ENCODE measurements at regions of chr17 and their contacts with region 1.

Region 1: DNA sequence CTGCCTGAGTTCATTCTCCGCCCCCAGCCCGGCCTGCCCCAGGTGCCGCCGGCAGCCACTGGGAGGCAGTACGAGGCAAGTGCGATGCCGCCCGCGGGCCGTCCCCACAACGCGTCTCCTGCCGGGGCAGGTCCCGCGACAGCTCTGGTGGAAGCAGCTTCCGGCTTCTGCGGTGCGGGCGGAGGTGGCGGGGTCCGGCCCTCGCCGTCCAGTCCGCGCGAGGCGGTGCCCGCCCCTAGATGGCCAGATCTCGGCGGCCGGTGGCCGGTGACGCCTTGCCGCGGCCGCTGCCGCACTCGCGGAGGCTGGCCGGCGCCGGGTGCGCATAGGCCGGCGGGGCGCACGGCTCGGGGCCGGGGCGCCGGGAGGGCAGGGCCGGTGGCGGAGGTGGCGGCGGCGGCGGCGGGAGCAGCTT is 1.8 kb downstream of the GJD3 start:
- DNase-seq: peak; percentile 56 to 85 (median 73)
- ATAC-seq: peak in 3 of 4 donors; percentile 27 to 64 (median 43)
- H3K4me3 ChIP-seq: peak overlapping the region in 11 of 12 donors; percentile 43 to 69 (median 58)
- H3K27ac ChIP-seq: peak overlapping the region in 6 of 12 donors; percentile 17 to 60 (median 42)
- H3K4me1 ChIP-seq: peaks cover 0 to 33% (median 12%) of the 10 kb centered on the region in 12 donors
- H3K27me3 ChIP-seq: peaks cover 0 to 16% (median 0%) of the 10 kb centered on the region in 9 donors
- CTCF ChIP-seq: peak; percentile 25 to 70 (median 49)
- POLR2A ChIP-seq: no peak

Region 2: DNA sequence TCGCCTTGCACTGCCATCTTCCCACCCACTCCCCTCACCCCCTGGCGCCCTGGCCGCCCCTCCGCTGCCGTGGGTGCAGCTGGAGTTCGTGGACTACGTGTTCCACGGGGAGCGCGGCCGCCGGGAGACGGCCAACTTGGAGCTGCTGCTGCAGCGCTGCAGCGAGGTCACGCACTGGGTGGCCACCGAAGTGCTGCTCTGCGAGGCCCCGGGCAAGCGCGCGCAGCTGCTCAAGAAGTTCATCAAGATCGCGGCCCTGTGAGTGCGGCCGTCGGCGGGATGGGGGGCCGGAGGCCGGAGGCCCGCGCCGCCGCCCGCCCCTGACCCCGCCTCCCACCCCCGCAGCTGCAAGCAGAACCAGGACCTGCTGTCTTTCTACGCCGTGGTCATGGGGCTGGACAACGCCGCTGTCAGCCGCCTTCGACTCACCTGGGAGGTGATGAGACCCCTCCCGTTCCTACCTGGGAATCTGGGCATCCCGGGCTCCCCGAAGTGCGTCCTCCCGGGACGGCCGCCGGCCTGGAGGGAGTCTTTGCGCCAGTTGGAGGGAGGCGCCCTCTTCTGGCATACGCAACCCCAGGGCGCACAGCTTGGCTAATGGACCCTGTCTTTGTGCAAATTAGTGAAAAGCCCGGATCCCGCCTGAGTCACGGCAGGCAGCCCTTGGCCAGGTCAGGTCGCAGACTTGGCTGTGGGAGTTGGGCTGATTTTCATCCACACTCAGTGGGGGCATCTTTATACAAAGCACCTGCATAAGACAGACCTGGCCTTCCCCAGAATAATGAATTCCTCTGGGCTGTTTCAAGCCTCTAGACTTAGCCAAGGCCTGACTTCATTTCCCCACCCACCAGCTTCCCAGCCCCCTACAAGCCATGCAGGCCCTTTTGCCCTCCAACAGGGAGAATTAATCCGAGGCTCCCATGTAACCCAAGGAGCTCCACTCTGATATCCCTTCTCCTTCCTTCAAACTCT is 171.2 kb before region 1 on chr17:
- intact Hi-C with region 1: loop called in 1 of 10 experiments (anchors 10 kb)
- DNase-seq: peak; percentile 71 to 86 (median 78)
- ATAC-seq: peak; percentile 59 to 87 (median 84)
- H3K4me3 ChIP-seq: peak overlapping the region in 11 of 12 donors; percentile 40 to 75 (median 62)
- H3K27ac ChIP-seq: peak overlapping the region in 7 of 12 donors; percentile 1 to 67 (median 46)
- H3K4me1 ChIP-seq: peaks cover 0 to 23% (median 8%) of the 10 kb centered on the region in 12 donors
- H3K27me3 ChIP-seq: no peaks in the 10 kb centered on the region
- CTCF ChIP-seq: peak; percentile 46 to 84 (median 69)
- POLR2A ChIP-seq: no peak

Region 3: DNA sequence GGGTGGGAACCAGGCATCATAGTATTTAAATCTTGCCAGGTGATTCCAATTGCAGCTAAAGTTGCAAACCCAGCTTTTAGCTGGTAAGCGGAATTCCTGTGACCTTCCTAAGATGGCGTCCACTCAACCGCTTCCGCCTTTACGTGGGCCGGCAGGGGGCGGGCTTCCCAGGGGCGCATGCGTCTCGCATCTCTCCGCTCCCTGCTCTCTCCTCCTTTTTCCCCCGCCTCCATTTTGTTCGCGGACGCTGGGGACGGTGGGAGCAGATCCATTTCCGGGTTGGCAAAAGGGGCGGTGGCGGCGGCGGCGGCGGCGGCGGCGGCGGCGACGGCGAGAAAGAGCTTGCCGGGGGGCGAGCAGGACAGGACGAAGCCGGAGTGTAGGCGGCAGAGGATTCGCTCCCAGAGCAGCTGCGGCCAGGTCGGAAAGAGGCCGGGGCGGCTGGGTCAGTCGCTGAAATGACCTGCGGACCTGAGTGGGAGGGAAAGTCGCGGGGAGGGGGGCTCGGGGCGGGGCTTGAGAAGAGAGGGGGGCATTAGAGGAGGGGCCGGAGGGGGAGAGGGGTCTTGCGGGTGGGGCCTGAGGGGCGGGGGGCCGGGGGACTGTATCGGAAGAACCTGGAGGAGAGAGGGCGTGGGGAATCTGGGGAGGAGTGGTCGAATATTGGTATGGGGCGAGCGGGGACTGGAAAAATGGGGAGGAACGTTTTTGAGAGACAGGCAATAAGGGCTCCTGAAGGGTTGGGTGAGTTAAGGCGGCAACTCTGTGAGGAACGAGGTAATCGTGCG is 143.4 kb before region 1 on chr17 and contains the start of gene WIPF2:
- intact Hi-C with region 1: loop called in 1 of 10 experiments (anchors 10 kb)
- DNase-seq: peak; percentile 97 to 98 (median 97)
- ATAC-seq: peak; percentile 98 to 99 (median 99)
- H3K4me3 ChIP-seq: peak within 1 kb of the TSS; percentile 53 to 91 (median 71)
- H3K27ac ChIP-seq: peak within 1 kb of the TSS; percentile 69 to 96 (median 91)
- H3K4me1 ChIP-seq: peaks cover 0 to 28% (median 12%) of the 10 kb centered on the region in 12 donors
- H3K27me3 ChIP-seq: no peaks in the 10 kb centered on the region
- CTCF ChIP-seq: peak; percentile 56 to 93 (median 82)
- POLR2A ChIP-seq: peak in 1 of 2 donors; percentile 79
- total RNA-seq, gene WIPF2: 8.4 to 17.6 (median 11.2) TPM

Region 4: DNA sequence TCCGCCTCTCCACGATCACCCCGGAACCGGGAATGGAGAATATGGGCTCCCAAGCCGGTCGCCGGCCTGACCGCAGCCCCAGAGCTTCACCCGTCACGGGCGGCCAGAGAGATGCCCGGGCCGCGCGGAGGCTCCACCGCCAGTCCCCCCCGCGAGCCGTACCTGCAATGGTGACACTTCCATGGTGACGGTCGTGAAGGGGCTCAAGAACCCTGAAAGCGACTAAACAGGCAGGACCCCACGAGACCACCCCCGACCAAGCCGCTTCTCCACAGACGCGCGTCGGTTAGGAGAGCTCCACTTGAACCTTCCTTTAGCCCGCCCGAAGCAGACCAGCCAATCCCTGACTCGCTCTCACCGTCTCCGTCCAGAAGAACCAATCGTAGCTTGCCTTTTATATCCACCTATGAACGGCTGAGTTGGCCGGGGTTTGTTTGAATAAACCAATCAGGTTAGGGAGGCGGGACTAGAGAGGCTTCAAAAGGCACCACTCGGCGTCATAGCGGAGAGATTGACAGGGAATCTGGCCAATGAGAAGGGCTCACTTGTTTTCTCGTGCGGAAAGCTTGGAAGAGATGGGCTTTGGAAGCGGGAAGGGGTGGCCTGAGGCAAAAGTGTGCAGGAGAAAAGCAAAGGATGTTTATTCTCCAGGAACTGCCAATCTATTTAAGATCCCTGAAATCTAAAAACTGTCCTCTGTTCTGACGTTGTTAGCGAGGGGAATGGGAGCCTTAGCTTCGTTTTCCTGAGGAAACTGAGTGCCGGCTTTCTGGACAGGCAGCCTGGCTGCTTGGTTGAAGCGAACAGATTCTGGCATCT is 55.1 kb after region 1 on chr17 and contains the start of gene TOP2A:
- intact Hi-C with region 1: loop called in 8 of 10 experiments (anchors 2 to 5 kb)
- DNase-seq: peak; percentile 88 to 99 (median 97)
- ATAC-seq: peak; percentile 99 to 100 (median 100)
- H3K4me3 ChIP-seq: peak within 1 kb of the TSS; percentile 37 to 80 (median 60)
- H3K27ac ChIP-seq: peak within 1 kb of the TSS in 7 of 12 donors; percentile 12 to 76 (median 39)
- H3K4me1 ChIP-seq: peaks cover 0 to 39% (median 9%) of the 10 kb centered on the region in 12 donors
- H3K27me3 ChIP-seq: peaks cover 0 to 11% (median 0%) of the 10 kb centered on the region in 9 donors
- CTCF ChIP-seq: no peak
- POLR2A ChIP-seq: no peak
- total RNA-seq, gene TOP2A: 0.39 to 28.9 (median 1.7) TPM

Region 5: DNA sequence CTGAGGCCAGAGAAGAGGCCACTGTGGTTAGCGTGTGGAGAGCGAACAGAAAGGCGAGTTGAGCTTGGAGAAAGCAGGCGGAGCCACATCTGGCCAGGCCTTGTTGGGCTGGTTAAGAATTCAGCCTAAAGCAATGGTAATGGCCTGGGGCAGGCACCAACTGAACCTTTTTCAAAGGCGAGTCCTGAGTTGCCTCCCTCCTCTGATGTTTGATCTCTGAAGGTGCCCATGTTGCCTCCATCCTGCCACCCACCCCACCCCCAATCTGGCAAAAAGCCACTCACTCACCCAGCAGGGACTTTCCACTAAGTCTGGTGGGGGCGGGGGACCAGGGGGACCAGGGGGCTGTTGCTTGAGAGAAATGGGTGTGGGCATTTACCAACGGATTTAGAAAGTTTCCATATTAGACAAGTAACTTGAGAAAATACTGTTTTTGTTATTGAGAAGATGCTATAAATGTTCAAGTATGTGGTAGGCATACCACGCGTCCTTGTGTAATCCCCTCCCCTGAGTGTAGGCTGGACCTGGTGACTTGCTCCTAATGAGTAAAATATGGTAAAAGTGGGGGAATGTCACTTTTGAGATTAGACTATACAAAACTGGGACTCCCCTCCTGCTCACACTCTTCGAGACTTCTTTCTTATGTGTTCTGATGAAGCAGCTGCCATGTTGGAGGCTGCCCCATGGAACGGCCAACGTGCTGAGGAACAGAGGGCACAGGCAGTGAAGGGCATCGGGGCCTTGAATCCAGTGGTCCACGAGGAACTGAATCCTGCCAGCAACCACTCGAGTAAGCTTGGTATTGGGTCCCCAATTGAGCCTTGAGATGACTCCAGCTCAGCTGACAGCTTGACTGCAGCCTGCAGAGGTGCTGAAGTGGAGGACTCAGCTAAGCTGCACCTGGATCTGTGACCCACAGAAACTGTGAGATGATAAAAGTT is 168.6 kb after region 1 on chr17:
- intact Hi-C with region 1: loop called in 9 of 10 experiments (anchors 1 to 10 kb)
- DNase-seq: peak in 1 of 5 donors; percentile 19
- ATAC-seq: no peak
- H3K4me3 ChIP-seq: no peak overlapping the region
- H3K27ac ChIP-seq: peak overlapping the region in 6 of 12 donors; percentile 22 to 84 (median 75)
- H3K4me1 ChIP-seq: peaks cover 0 to 48% (median 26%) of the 10 kb centered on the region in 12 donors
- H3K27me3 ChIP-seq: no peaks in the 10 kb centered on the region
- CTCF ChIP-seq: no peak
- POLR2A ChIP-seq: no peak

Region 6: GRCh38 chr17:40559954-40560591 is 197.4 kb after region 1 on chr17:
- intact Hi-C with region 1: loop called in 7 of 10 experiments (anchors 1 to 5 kb)
- DNase-seq: peak; percentile 84 to 91 (median 87)
- ATAC-seq: peak; percentile 72 to 85 (median 83)
- H3K4me3 ChIP-seq: peak overlapping the region in 7 of 12 donors; percentile 6 to 48 (median 30)
- H3K27ac ChIP-seq: peak overlapping the region in 11 of 12 donors; percentile 47 to 92 (median 71)
- H3K4me1 ChIP-seq: peaks cover 12 to 68% (median 44%) of the 10 kb centered on the region in 12 donors
- H3K27me3 ChIP-seq: peaks cover 0 to 10% (median 0%) of the 10 kb centered on the region in 9 donors
- CTCF ChIP-seq: peak; percentile 93 to 99 (median 98)
- POLR2A ChIP-seq: peak in 1 of 2 donors; percentile 27

Region 7: GRCh38 chr17:40582328-40582901 is 219.7 kb after region 1 on chr17:
- intact Hi-C with region 1: no loop called
- DNase-seq: peak; percentile 53 to 86 (median 68)
- ATAC-seq: peak; percentile 76 to 95 (median 84)
- H3K4me3 ChIP-seq: peak overlapping the region in 1 of 12 donors; percentile 5
- H3K27ac ChIP-seq: peak overlapping the region in 11 of 12 donors; percentile 22 to 79 (median 62)
- H3K4me1 ChIP-seq: peaks cover 0 to 21% (median 3%) of the 10 kb centered on the region in 12 donors
- H3K27me3 ChIP-seq: no peaks in the 10 kb centered on the region
- CTCF ChIP-seq: no peak
- POLR2A ChIP-seq: no peak